Activated T-helper 2 cell treated with anti-CD3 and anti-CD28 coated beads, Interferon-gamma antibody, Interleukin-2, Interleukin-4, amounts not matched to agents 10 μg/mL and 5 μg/mL and 100 μg/mL, durations not matched to agents 14 hours and 24 hours and 36 hours (primary cell): ENCODE measurements at regions of chr11 and their contacts with region 1.

Region 1: GRCh38 chr11:32821517-32821916 is 8.2 kb upstream of the PRRG4 start:
- DNase-seq: no peak
- H3K4me3 Mint-ChIP-seq: no peak overlapping the region
- H3K27ac Mint-ChIP-seq: peak overlapping the region; percentile 32
- H3K4me1 Mint-ChIP-seq: peaks cover 19% of the 10 kb centered on the region
- H3K27me3 Mint-ChIP-seq: no peaks in the 10 kb centered on the region

Region 2: DNA sequence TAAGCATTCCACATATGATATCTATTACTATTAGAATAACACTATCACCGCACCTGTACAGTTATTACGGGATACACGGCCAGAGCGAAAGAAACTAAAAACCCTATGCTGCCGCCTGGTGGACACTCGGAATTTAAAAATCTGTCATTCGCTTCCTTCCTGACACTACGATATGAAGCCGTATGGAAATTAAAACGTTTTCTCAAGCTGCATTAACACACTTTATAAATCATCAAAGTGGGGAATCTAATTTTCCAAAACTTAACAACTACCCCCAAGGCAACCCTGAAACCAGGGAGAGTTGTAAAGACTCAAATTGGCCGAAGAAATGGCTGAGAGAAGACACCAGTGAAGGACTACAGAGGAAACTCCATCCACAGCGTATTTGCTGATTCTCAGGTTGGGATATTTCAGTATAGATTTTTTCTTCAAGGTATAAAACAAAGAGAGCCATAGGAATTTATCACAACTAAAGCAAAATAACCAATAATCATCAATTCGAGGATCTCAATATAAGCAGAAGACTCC is 28.5 kb before region 1 on chr11:
- intact Hi-C with region 1: no loop called
- DNase-seq: peak; percentile 49
- H3K4me3 Mint-ChIP-seq: peak overlapping the region; percentile 13
- H3K27ac Mint-ChIP-seq: no peak overlapping the region
- H3K4me1 Mint-ChIP-seq: peaks cover 3% of the 10 kb centered on the region
- H3K27me3 Mint-ChIP-seq: peaks cover 27% of the 10 kb centered on the region

Region 3: GRCh38 chr11:33039274-33040032 is 217.9 kb after region 1 on chr11 and contains the start of gene TCP11L1:
- intact Hi-C with region 1: loop called (anchors 1 kb)
- DNase-seq: peak; percentile 74
- H3K4me3 Mint-ChIP-seq: peak within 1 kb of the TSS; percentile 91
- H3K27ac Mint-ChIP-seq: peak within 1 kb of the TSS; percentile 93
- H3K4me1 Mint-ChIP-seq: peaks cover 36% of the 10 kb centered on the region
- H3K27me3 Mint-ChIP-seq: peaks cover 18% of the 10 kb centered on the region
- total RNA-seq, gene TCP11L1: 12.4 and 13.8 TPM in 2 replicates